ENCODE measurements at regions of chrX and their contacts with region 1.

Region 1: DNA sequence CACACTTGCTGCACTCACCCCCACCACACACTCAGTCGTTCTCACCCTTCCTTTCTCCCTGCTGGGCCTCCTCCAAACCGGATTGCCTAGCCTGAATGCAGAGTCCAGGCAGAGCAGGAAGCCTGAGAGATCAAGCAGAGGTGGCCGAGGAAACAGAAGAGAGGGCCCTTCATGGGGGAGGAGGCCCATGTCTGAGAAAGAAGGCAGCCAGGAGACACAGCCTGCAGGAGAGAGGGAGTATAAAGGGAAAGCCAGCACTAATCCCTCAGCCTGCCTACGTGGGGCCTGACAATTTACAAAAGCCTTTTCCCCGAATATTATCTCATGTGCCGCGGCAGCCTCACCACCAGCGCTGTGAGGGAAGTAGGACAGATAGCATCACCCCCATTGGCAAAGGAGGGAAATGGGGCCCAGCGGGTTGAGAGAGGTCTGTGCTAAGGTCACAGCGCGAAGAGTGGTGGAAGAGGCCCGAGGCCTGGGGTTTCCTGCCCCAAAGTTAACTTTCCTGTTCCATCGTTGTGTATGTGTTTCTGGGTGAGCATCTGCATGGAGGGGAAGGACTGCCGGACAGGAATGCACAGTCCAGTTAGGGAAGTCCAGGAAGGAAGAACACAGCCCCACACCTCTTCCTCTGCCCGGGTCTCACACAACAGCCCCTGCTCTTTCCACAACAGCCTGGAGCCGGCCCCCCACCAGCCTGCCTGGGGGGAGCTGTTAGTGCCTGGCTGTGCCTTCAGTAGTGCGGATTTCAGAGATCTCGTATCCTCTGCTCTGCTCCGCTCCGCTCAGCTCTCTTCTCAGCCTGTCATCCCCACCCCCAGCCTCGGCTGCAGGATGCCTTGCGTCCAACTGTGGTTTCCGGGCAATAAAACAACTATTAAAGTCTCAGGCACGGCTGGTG is 50.9 kb upstream of the BCOR start:
- DNase-seq: peak; percentile 92
- H3K4me3 ChIP-seq: peak overlapping the region; percentile 10
- H3K27ac ChIP-seq: peak overlapping the region; percentile 91
- H3K4me1 ChIP-seq: peaks cover 70% of the 10 kb centered on the region
- H3K27me3 ChIP-seq: no peaks in the 10 kb centered on the region
- CTCF ChIP-seq: no peak

Region 2: GRCh38 chrX:39850630-39851152 is 297.9 kb before region 1 on chrX:
- CTCF ChIA-PET with region 1: no interaction called
- POLR2A ChIA-PET with region 1: no interaction called
- intact Hi-C with region 1: no loop called
- DNase-seq: peak; percentile 68
- H3K4me3 ChIP-seq: no peak overlapping the region
- H3K27ac ChIP-seq: no peak overlapping the region
- H3K4me1 ChIP-seq: peaks cover 11% of the 10 kb centered on the region
- H3K27me3 ChIP-seq: no peaks in the 10 kb centered on the region
- CTCF ChIP-seq: no peak

Region 3: DNA sequence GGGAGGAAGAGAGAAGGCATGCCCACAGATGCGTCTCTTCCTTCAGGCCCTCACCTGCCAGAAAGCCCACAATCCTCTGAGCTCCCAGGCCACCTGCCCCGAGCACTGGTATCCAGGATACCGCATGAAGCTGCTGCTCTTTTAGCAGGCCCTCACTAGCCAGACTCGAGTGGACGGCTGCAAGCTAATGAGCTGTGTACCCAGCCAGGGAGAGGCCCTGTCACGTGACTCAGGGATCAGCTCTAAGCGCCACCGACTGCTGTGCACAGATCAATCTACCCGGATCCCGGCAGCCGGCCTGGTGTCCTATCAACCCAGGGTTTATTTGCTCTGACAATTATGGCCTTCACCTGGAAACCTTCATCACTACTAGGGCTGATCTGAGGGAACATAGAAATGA is 89.9 kb before region 1 on chrX:
- CTCF ChIA-PET with region 1: no interaction called
- POLR2A ChIA-PET with region 1: no interaction called
- intact Hi-C with region 1: no loop called
- DNase-seq: no peak
- H3K4me3 ChIP-seq: no peak overlapping the region
- H3K27ac ChIP-seq: no peak overlapping the region
- H3K4me1 ChIP-seq: no peaks in the 10 kb centered on the region
- H3K27me3 ChIP-seq: no peaks in the 10 kb centered on the region
- CTCF ChIP-seq: no peak

Region 4: GRCh38 chrX:40108959-40109287 is 39.7 kb before region 1 on chrX:
- CTCF ChIA-PET with region 1: no interaction called
- POLR2A ChIA-PET with region 1: interaction called, 6 read pairs
- intact Hi-C with region 1: loop called (anchors 1 kb)
- DNase-seq: peak; percentile 81
- H3K4me3 ChIP-seq: peak overlapping the region; percentile 59
- H3K27ac ChIP-seq: peak overlapping the region; percentile 88
- H3K4me1 ChIP-seq: peaks cover 28% of the 10 kb centered on the region
- H3K27me3 ChIP-seq: no peaks in the 10 kb centered on the region
- CTCF ChIP-seq: no peak

Region 5: DNA sequence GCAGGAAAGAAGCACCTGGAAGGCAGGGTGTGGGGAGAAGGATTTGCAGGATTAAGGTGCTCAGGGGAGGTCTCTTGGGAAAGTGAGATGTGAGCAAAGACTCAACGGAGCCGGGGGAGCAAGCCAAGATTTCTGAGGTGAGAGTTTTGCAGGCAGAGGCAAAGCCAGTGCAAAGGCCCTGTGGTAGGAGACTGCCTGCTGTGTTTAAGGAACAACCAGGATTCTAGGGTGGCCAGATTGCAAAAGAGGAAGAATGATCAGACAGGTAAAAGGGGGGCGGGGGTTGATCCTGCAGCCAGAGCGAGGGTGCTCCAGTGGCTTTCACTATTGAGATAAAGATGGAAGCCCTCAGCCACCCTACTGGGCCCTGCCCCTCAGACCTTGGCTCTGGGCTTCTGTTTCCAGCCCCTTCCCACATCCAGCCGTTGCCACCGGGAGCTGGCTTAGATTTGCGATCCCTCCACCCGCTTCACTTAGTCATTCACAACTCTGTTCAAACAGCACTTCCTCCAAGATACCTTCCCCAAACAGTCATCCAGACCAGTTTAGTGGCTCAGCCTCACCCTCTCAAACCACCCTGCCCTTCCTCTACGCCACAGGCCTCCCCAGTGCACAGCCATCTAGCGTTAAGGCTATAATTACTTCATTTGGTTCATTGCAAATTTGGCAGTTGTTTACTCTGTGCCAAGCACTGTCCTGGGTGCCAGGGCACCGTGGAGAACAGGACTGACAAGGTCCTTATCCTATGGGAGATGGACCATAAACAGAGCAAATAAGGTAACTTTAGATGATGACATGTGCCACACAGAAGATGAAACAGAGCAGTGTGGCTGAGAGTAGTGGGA is 27.6 kb before region 1 on chrX:
- CTCF ChIA-PET with region 1: no interaction called
- POLR2A ChIA-PET with region 1: interaction called, 10 read pairs
- intact Hi-C with region 1: no loop called
- DNase-seq: no peak
- H3K4me3 ChIP-seq: no peak overlapping the region
- H3K27ac ChIP-seq: no peak overlapping the region
- H3K4me1 ChIP-seq: no peaks in the 10 kb centered on the region
- H3K27me3 ChIP-seq: no peaks in the 10 kb centered on the region
- CTCF ChIP-seq: no peak

Region 6: DNA sequence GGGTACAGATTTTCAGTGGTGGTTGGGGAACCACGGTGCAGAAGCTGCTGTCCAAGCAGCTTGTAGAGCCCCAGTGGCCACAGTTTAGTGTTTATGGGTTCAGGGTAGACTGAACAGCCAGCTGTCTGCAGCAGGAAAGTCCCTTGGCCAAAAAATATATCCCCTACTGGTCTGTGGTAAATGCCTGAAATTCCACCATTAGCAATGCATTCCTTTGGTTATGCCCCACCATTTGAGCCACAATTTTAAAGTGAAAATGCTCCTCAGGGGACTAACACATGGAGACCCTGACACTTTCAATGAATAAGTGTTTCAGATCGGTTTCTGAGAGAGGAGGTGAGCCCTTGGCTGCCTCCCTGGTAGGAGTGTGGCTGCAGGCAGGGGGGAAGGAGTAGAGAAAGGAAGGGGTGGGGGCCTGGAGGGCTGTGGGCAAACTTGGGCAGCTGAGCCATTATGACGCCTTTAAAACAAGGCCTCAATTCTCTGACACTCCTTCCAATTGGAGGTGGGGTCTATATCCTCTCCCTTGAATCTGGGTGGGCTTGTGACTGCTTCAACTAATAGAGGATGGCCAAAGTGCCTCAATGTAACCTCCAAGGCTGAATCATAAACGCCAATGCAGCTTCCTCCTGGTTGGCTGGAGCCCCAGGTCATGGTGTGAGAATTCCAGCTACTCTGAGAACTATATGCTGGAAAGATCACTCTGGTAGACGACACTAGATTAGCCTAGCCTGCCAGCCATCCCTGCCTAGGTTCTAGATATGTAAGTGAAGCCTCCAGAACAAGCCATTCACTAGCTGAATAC is 356.4 kb after region 1 on chrX:
- CTCF ChIA-PET with region 1: no interaction called
- POLR2A ChIA-PET with region 1: no interaction called
- intact Hi-C with region 1: no loop called
- DNase-seq: peak; percentile 51
- H3K4me3 ChIP-seq: no peak overlapping the region
- H3K27ac ChIP-seq: peak overlapping the region; percentile 16
- H3K4me1 ChIP-seq: no peaks in the 10 kb centered on the region
- H3K27me3 ChIP-seq: no peaks in the 10 kb centered on the region
- CTCF ChIP-seq: no peak

Region 7: DNA sequence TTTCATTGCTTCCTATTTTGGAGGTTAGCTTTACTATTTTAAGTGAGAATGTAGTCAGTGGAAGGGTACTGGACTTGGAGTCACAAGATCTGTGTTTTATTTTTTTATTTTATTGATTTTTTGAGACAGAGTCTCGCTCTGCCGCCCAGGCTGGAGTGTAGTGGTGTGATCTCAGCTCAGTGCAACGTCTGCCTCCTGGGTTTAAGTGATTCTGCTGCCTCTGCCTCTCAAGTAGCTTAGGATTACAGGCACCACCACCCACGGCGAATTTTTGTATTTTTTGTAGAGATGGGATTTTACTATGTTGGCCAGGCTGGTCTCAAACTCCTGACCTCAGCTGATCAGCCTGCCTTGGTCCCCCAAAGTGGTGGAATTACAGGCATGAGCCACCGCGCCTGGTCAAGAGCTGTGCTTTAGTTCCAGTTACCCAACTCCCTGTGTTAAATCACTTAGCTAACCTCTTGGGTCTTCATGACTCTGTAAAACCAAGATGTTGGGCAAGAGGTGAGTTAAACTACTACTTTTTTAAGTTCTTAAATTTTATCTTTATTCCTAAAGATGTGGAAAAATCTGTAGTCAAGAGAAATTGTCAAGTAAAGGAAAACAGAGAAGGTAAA is 947.8 kb after region 1 on chrX:
- CTCF ChIA-PET with region 1: no interaction called
- POLR2A ChIA-PET with region 1: no interaction called
- intact Hi-C with region 1: no loop called
- DNase-seq: no peak
- H3K4me3 ChIP-seq: no peak overlapping the region
- H3K27ac ChIP-seq: no peak overlapping the region
- H3K4me1 ChIP-seq: peaks cover 5% of the 10 kb centered on the region
- H3K27me3 ChIP-seq: no peaks in the 10 kb centered on the region
- CTCF ChIP-seq: no peak

Measured in A673 (cell line).